ENCODE measurements at regions of chr1 and their contacts with region 1.

Region 1: DNA sequence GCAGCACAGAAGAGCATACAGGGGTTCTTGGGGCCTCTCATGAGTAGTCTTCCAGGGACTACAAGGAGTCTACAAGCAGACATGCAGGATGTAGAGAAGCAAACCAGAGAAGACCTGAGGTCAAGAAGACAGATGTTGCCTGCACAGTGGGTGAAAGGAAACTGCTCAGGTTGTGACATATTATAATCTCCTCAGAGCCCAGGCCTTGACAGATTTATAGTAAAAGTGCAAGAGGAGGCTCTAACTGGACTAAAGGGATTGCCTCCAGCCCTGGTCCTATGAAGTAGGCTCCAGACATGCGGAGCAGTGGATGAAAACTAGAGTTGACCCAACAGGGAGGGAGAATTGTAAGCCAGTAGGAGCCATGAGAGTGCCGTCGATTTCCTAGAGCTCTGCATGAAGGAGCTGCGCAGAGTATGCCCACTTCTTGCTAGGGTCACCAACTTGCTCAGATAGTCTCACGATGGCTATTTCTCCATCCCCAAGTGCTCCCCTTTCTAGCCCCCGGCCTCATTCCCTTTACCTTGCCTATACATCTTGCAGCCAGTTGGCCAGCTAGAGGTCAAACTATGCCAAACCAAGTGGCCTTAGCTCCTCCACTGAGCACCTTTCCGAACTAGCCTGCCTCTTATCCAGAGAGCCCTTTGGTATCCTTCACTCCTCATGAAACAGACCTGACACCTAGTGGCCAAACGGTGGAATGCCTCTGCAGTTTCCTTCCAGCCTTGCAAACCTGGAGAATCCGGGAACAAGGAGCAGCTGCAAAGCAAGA is 36.2 kb upstream of the IPO9 start:
- DNase-seq: peak; percentile 89

Region 2: DNA sequence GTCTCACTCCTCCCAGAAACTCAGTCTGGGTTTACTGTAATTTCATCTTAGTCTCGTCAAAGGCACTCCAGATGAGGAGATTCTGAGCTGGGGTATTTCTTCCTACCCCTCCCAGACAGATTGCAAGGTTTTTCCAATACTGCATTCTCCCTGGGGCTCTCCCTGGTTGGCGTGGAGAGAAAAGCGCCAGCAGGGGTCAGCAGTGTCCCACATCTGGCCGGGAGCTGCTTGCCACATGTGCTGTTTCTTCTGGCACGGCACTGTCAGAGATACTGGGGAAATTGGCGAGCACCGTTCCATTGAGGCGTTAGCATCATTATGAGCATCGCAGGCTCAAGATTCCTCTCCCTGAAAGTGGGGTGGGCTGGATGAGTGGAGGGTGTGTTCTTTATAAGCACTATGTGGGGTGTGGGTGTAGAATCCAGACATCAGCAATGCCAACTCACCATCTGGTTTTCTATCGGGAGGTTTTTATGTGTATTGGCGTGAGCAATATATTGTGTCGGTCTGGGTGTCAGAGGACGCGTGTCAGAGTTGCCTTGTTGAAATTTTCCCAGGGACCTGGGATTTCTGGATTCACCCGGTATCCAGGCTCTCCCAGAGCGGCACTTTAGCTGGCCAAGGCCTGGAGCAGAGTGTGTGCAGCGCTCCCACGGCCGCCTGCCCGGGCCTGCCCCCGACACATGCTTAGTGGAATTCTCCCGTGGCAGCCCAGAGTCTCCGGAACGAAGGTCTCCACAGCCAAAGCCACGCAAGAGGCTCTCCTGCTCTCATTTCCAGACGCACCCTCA is 261.8 kb before region 1 on chr1:
- in situ Hi-C with region 1: loop called (anchors 25 kb)
- DNase-seq: peak; percentile 77